ENCODE measurements at regions of chr2 and their contacts with region 1.

Region 1: GRCh38 chr2:112601751-112602150 is 17.3 kb downstream of the CHCHD5 start:
- DNase-seq: no peak
- ATAC-seq: no peak
- H3K4me3 ChIP-seq: no peak overlapping the region
- H3K27ac ChIP-seq: no peak overlapping the region
- H3K4me1 ChIP-seq: peaks cover 0 to 3% of the 10 kb centered on the region in 2 experiments; a peak in 2 of 5 replicates
- H3K27me3 ChIP-seq: no peaks in the 10 kb centered on the region
- CTCF ChIP-seq: no peak
- EP300 ChIP-seq: no peak
- POLR2A ChIP-seq: no peak
- RAD21 ChIP-seq: no peak

Region 2: DNA sequence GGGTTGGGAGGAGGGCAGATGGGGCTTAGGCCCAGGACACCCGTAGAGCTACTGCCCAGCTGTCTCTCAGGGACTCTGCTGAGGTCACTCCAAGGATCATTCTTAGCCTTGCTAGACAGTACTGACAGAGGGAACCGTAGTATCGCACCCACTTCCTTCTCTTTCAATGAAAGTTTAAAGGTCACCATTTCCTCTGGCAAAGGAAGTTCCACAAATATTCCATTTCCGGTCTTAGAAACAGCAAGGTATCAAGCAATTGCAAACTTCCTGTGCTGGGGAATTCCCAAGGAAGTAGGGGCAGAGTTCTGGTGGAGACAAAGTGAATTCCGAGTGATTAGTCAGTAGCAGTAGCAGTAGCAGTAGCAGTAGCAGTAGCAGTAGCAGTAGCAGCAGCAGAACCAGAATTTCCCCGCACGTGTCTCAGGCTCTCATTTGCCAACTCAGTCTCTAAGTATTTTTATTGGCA is 210.1 kb after region 1 on chr2:
- CTCF ChIA-PET with region 1: no interaction called
- POLR2A ChIA-PET with region 1: no interaction called
- in situ Hi-C with region 1: no loop called
- intact Hi-C with region 1: no loop called
- DNase-seq: no peak
- ATAC-seq: peak; percentile 27; the same call in 2 of the 3 replicates
- H3K4me3 ChIP-seq: no peak overlapping the region
- H3K27ac ChIP-seq: no peak overlapping the region
- H3K4me1 ChIP-seq: peaks cover 0 to 29% of the 10 kb centered on the region in 2 experiments; a peak in 3 of 5 replicates
- H3K27me3 ChIP-seq: no peaks in the 10 kb centered on the region
- CTCF ChIP-seq: no peak
- EP300 ChIP-seq: no peak
- POLR2A ChIP-seq: no peak
- RAD21 ChIP-seq: no peak

Region 3: GRCh38 chr2:112884869-112885505 is 283.2 kb after region 1 on chr2:
- CTCF ChIA-PET with region 1: no interaction called
- POLR2A ChIA-PET with region 1: no interaction called
- in situ Hi-C with region 1: loop called (anchors 25 kb)
- intact Hi-C with region 1: loop called (anchors 5 kb)
- DNase-seq: peak; percentile 78 to 92 (median 89)
- ATAC-seq: peak; percentile 97
- H3K4me3 ChIP-seq: no peak overlapping the region
- H3K27ac ChIP-seq: no peak overlapping the region
- H3K4me1 ChIP-seq: peaks cover 0 to 12% of the 10 kb centered on the region in 2 experiments; a peak in 3 of 5 replicates
- H3K27me3 ChIP-seq: no peaks in the 10 kb centered on the region
- CTCF ChIP-seq: peak; percentile 81 to 93 (median 92)
- EP300 ChIP-seq: no peak
- POLR2A ChIP-seq: no peak
- RAD21 ChIP-seq: peak; percentile 97